Pancreas (tissue), 10 donors: ENCODE measurements at regions of chr9 and their contacts with region 1.

Region 1: GRCh38 chr9:124617471-124618141 is 110.4 kb upstream of the NR5A1 start:
- DNase-seq: peak; percentile 49 to 88 (median 78)
- ATAC-seq: peak; percentile 86 to 96 (median 92)
- H3K4me3 ChIP-seq: no peak overlapping the region
- H3K27ac ChIP-seq: peak overlapping the region in 2 of 4 donors; percentile 45 to 58
- H3K4me1 ChIP-seq: peaks cover 0 to 10% (median 9%) of the 10 kb centered on the region in 3 donors
- H3K27me3 ChIP-seq: no peaks in the 10 kb centered on the region
- CTCF ChIP-seq: peak; percentile 68 to 88 (median 80)

Region 2: DNA sequence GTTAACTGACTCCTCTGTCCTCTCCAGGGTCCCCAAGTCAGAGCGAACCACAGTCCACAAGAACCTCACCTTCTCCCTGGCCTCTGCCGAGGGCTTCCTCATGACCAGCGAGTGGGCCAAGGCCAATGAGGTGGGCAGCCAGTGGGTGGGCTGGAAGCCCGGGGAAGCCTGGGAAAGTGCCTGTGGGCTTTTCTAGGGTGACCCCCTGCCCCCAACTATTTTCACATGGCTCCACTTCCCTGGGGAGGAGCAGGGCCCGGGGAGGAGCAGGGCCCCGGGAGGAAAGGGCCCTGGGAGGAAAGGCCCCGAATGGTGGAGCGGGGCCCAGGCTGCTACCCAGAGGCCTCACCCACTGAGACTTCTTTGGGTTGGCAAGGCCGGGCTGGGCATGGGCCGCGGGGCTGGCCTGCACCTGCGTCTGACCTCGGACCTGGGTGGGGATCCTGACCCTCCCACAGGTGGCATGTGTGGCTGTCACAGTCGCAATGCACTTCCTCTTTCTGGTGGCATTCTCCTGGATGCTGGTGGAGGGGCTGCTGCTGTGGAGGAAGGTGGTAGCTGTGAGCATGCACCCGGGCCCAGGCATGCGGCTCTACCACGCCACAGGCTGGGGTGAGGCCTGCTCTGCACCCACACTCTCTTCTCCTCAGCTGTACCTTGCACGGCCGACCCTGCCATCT is 149.4 kb before region 1 on chr9:
- intact Hi-C with region 1: no loop called
- DNase-seq: peak in 2 of 6 donors; percentile 47 to 51
- ATAC-seq: no peak
- H3K4me3 ChIP-seq: no peak overlapping the region
- H3K27ac ChIP-seq: no peak overlapping the region
- H3K4me1 ChIP-seq: no peaks in the 10 kb centered on the region
- H3K27me3 ChIP-seq: no peaks in the 10 kb centered on the region
- CTCF ChIP-seq: no peak

Region 3: DNA sequence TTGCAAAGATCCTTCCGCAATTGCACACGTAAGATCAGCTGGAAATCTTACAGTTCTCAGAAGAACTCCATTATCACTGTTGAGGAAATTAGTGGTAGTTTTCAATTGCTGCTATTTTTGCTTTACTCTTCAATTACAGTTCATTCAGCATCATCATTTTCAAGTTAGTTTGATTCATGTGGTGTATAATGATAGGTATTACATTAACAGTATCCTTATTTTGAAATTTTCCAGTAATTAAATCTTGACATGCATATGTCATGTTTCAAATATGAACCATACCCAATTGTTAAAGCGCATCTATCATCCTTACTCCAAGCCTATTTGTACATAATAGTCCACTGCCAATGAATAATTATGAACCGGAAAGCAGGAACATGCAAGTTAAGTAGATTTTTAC is 93.2 kb after region 1 on chr9:
- intact Hi-C with region 1: loop called in 2 of 3 experiments (anchors 5 kb)
- DNase-seq: no peak
- ATAC-seq: no peak
- H3K4me3 ChIP-seq: no peak overlapping the region
- H3K27ac ChIP-seq: no peak overlapping the region
- H3K4me1 ChIP-seq: no peaks in the 10 kb centered on the region
- H3K27me3 ChIP-seq: no peaks in the 10 kb centered on the region
- CTCF ChIP-seq: no peak

Region 4: GRCh38 chr9:124754289-124754688 is 136.7 kb after region 1 on chr9:
- intact Hi-C with region 1: no loop called
- DNase-seq: no peak
- ATAC-seq: peak in 1 of 4 donors; percentile 37
- H3K4me3 ChIP-seq: no peak overlapping the region
- H3K27ac ChIP-seq: no peak overlapping the region
- H3K4me1 ChIP-seq: peaks cover 9 to 38% (median 22%) of the 10 kb centered on the region in 3 donors
- H3K27me3 ChIP-seq: no peaks in the 10 kb centered on the region
- CTCF ChIP-seq: no peak